ENCODE measurements at regions of chr2 and their contacts with region 1.

Region 1: GRCh38 chr2:135709992-135710391 is 31.7 kb upstream of the UBXN4 start:
- DNase-seq: peak; percentile 65
- ATAC-seq: peak; percentile 71
- H3K4me3 ChIP-seq: no peak overlapping the region
- H3K27ac ChIP-seq: no peak overlapping the region
- H3K4me1 ChIP-seq: no peaks in the 10 kb centered on the region
- H3K27me3 ChIP-seq: no peaks in the 10 kb centered on the region
- CTCF ChIP-seq: peak; percentile 95

Region 2: GRCh38 chr2:134988994-134989605 is 720.9 kb before region 1 on chr2:
- CTCF ChIA-PET with region 1: interaction called, 19 read pairs
- POLR2A ChIA-PET with region 1: interaction called, 3 read pairs
- intact Hi-C with region 1: loop called (anchors 1 kb)
- DNase-seq: peak; percentile 58
- ATAC-seq: peak; percentile 74
- H3K4me3 ChIP-seq: no peak overlapping the region
- H3K27ac ChIP-seq: no peak overlapping the region
- H3K4me1 ChIP-seq: no peaks in the 10 kb centered on the region
- H3K27me3 ChIP-seq: peaks cover 35% of the 10 kb centered on the region
- CTCF ChIP-seq: peak; percentile 79

Region 3: GRCh38 chr2:135424839-135425238 is 285.2 kb before region 1 on chr2:
- CTCF ChIA-PET with region 1: no interaction called
- POLR2A ChIA-PET with region 1: no interaction called
- intact Hi-C with region 1: loop called (anchors 2 kb)
- DNase-seq: peak; percentile 45
- ATAC-seq: 0 out of 2 replicates have a peak, but pooled peaks have one; percentile 54
- H3K4me3 ChIP-seq: no peak overlapping the region
- H3K27ac ChIP-seq: no peak overlapping the region
- H3K4me1 ChIP-seq: no peaks in the 10 kb centered on the region
- H3K27me3 ChIP-seq: no peaks in the 10 kb centered on the region
- CTCF ChIP-seq: peak; percentile 71

Region 4: DNA sequence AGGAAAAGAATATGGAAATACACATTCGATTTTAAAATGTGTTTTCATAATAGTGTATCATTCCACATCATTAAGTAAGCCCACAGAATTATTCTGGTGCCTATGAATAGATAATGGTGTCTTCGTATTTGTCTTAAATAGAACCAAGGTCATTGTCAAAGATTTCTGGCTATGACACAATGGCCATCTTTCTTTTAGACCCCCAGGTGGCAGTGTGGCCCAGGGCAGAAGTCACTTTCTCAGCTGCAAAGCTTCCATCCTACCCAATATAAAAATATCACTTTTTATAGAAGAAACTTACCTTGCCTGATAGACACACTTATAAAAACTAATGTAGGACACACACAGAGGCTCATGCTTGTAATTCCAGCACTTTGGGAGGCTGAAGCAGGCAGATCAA is 236.4 kb before region 1 on chr2:
- CTCF ChIA-PET with region 1: interaction called, 14 read pairs
- POLR2A ChIA-PET with region 1: no interaction called
- intact Hi-C with region 1: loop called (anchors 1 kb)
- DNase-seq: peak; percentile 56
- ATAC-seq: peak; percentile 68
- H3K4me3 ChIP-seq: no peak overlapping the region
- H3K27ac ChIP-seq: no peak overlapping the region
- H3K4me1 ChIP-seq: no peaks in the 10 kb centered on the region
- H3K27me3 ChIP-seq: no peaks in the 10 kb centered on the region
- CTCF ChIP-seq: peak; percentile 82

Region 5: DNA sequence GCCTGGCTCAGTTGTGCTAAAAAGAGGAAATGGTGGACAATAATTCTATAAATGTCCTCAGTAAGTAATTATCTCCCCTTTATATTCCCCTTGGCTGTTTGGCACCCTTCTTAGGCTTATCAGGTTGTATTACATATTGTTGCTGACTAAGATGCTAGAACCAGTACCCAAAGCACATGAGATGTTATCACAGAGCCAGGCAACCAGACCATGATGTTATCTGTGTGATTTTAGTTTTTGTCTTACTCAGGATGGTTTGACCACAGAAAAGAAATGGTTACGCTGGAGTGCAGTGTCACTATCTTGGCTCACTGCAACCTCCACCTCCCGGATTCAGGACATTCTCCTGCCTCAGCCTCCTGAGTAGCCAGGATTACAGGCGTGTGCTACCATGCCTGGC is 163.6 kb before region 1 on chr2:
- CTCF ChIA-PET with region 1: no interaction called
- POLR2A ChIA-PET with region 1: no interaction called
- intact Hi-C with region 1: no loop called
- DNase-seq: no peak
- ATAC-seq: no peak
- H3K4me3 ChIP-seq: no peak overlapping the region
- H3K27ac ChIP-seq: no peak overlapping the region
- H3K4me1 ChIP-seq: no peaks in the 10 kb centered on the region
- H3K27me3 ChIP-seq: no peaks in the 10 kb centered on the region
- CTCF ChIP-seq: no peak

Region 6: GRCh38 chr2:135573620-135574019 is 136.4 kb before region 1 on chr2:
- CTCF ChIA-PET with region 1: no interaction called
- POLR2A ChIA-PET with region 1: no interaction called
- intact Hi-C with region 1: loop called (anchors 1 kb)
- DNase-seq: no peak
- ATAC-seq: peak; percentile 35; the same call in 1 of the 2 replicates
- H3K4me3 ChIP-seq: no peak overlapping the region
- H3K27ac ChIP-seq: no peak overlapping the region
- H3K4me1 ChIP-seq: no peaks in the 10 kb centered on the region
- H3K27me3 ChIP-seq: no peaks in the 10 kb centered on the region
- CTCF ChIP-seq: peak; percentile 39; the same call in 1 of the 2 replicates

Region 7: DNA sequence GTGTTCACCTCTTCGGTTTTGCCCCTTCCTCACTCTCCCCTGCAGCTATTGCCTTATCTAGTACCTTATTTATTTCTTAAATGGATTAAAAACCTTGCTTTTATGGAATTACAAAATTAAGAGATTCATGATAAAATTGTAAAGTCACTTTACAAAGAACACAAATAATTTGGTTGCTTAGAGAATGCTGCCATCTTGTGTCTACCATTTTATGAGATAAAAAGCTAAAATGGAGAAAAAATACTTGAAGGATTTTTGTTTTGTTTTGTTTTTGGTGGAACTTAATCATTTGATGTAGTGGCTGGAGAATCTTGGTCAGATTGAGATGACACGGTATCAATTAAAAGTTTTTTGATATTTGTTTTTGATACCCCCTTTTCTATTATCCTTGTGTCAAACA is 109.1 kb before region 1 on chr2:
- CTCF ChIA-PET with region 1: no interaction called
- POLR2A ChIA-PET with region 1: no interaction called
- intact Hi-C with region 1: loop called (anchors 5 kb)
- DNase-seq: peak; percentile 28
- ATAC-seq: no peak
- H3K4me3 ChIP-seq: no peak overlapping the region
- H3K27ac ChIP-seq: no peak overlapping the region
- H3K4me1 ChIP-seq: no peaks in the 10 kb centered on the region
- H3K27me3 ChIP-seq: no peaks in the 10 kb centered on the region
- CTCF ChIP-seq: no peak; the same call in 1 of the 2 replicates

Measured in PC-3 (cell line).